Left colon (tissue), 2 donors: ENCODE measurements at regions of chr5 and their contacts with region 1.

Region 1: DNA sequence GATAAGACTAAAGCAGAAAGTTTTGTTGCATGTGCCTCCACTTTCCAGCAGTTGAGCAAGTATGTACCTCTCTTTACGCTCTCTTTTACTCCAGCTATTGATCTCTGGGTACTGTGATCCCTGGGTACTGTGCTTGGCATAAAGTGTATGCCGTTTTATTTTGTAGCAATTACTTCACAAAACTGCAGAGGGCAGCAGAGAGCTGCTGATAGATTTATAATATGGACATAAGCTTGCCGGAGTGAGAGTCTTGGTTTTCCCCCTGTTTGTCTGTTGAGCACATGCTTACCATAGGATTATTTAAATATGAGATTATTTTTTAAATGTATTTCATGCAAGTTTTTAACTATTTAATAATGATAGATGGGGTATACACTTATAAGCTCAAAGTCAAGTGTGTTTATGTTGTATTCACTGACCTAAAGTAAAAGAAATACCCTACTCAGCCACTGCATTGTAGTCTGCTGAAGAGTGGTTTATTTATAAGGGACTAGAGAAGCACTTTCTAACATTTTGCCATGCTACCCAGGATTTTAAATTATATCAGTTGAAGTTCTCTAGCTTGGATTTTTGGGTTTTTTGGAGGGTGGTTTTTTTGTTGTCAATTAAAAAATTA is 13.0 kb downstream of the TTC1 start:
- DNase-seq: peak in 1 of 2 donors; percentile 26
- ATAC-seq: peak; percentile 90

Region 2: DNA sequence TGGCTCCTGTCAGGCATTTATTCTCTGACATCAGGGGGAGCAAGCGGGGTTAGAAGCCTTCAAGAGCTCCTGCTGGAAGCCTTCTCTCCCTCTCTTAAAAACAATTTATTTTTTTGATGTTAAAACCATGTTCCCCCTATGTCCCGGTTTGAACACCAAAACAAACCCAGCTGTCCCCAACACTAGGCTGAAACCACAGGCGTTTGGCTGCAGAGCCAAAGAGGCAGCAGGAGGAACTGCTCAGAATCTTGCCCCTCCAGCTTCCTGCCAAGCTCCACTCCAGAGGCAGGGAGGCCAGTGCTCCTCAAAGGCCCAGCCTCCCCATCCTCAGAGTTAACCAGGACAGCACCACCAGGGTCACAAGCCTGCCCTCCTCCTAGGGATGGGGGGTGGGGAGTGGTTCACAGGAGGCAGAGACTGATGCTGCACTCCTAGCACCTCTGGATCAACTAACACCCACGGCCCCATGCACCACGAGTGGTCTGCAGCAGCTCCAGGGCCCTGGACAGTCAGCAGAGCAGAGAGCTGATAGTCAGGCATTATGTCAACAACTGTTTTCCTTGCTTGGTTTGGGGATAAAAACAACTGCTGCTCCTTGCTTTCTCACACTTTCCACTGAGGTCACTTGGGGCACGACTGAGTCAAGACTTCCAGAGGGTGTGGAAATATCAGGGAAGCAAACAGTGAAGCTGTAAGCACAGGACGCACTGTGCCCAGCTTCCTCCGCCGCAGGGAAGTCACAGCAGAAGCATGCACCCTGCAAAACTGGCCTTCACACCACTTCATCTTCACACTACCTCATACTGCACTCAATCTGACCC is 202.1 kb before region 1 on chr5:
- intact Hi-C with region 1: no loop called
- DNase-seq: peak; percentile 11 to 57
- ATAC-seq: no peak

Region 3: GRCh38 chr5:159838551-159839222 is 183.3 kb before region 1 on chr5:
- intact Hi-C with region 1: no loop called
- DNase-seq: no peak
- ATAC-seq: no peak

Region 4: GRCh38 chr5:160082614-160083500 is 60.9 kb after region 1 on chr5:
- intact Hi-C with region 1: no loop called
- DNase-seq: no peak
- ATAC-seq: no peak

Region 5: DNA sequence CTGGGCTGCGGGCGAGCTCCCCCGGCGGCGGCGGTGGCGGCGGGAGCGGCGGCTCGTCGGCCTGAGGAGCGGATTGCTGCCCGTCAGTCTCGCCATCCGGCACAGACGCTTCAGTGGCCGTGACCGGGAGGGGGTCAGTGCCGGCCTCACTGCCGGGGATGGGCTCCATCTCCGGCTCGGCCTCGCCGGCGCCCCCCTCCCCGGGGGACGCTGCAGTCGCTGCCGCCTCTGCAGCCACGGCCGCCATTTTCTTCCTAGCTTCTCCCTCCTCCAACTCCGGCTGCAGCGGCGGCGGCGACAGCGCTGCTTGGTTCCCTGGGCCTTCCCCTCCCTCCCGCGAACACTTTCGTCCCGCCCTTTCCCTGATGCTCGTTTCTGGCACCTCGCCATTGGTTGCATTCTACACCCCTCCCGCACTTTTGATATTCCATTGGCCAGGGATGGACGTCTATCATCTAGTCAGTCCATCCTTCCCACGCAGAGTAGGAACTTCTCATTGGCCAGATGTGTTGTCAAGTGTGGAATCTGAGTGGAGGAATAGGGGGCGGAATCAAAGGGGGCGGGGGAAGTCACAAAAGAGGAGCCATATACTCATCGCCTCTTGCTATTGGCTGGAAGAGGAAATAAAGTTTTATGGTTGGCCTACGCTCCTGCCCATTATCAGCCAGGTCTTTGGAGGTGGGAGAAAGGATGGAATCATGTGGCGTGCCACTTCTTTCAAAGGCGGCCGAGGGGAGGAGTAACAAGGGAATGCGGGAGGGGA is 97.4 kb after region 1 on chr5 and contains the start of gene PWWP2A:
- intact Hi-C with region 1: loop called in 1 of 2 experiments (anchors 5 kb)
- DNase-seq: peak; percentile 98 to 99
- ATAC-seq: peak; percentile 89
- total RNA-seq, gene PWWP2A: 39.1 to 39.2 TPM

Region 6: DNA sequence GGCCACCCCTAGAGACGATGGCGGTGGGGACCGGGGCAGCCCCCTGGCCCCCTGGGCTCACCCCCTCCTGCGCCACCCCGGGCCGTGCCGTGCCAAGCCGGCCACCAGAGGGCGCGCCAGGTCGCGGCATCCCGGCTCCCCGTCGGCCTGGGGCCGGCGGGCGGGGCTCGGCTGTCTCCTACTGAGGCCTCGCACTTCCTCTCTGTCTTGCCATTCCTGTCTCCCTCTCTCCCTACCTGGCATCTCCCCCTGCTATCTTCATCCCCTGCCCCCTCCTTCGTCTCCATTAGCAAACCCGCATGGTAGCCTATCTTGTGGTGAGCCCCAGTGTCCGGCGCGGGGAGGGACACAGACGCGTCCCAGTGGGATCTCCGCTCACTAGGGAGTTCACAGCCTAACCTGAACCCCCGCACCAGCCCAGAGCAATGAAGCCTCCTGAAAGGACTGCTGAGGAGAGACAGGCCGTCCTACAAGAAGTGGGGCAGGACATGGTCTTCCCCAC is 177.5 kb after region 1 on chr5:
- intact Hi-C with region 1: loop called in 1 of 2 experiments (anchors 5 kb)
- DNase-seq: peak; percentile 32 to 77
- ATAC-seq: peak; percentile 98

Region 7: DNA sequence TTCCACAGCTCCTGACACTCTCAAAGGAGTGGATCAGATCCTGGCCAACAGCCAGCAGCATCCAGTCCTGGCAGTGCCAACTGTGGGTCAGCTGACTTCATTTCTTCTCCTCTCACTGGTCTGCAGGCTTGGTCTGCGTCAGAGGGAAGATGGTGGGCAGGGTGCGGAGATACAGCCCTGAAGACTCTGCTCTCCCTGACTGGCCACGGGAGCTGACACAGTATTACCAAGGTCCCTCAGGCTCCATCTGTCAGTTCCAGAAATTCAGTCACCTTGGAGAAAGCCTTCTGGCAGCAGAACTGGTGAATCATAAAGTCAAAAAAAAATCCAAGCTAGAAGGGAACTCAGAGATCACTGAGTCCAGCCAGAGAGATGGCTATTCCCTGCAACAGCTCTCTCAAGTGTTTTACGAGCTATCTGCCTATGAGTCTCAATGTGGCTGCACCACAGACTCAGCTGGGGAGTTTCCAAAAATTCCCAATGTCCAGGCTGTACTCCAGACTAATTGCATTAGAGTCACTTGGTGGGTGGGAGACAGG is 320.5 kb after region 1 on chr5:
- intact Hi-C with region 1: loop called in 1 of 2 experiments (anchors 5 kb)
- DNase-seq: peak in 1 of 2 donors; percentile 30
- ATAC-seq: peak; percentile 19

Region 8: GRCh38 chr5:160390787-160391696 is 369.1 kb after region 1 on chr5:
- intact Hi-C with region 1: loop called in 1 of 2 experiments (anchors 2 kb)
- DNase-seq: no peak
- ATAC-seq: no peak